ENCODE measurements at regions of chr11 and their contacts with region 1.

Region 1: DNA sequence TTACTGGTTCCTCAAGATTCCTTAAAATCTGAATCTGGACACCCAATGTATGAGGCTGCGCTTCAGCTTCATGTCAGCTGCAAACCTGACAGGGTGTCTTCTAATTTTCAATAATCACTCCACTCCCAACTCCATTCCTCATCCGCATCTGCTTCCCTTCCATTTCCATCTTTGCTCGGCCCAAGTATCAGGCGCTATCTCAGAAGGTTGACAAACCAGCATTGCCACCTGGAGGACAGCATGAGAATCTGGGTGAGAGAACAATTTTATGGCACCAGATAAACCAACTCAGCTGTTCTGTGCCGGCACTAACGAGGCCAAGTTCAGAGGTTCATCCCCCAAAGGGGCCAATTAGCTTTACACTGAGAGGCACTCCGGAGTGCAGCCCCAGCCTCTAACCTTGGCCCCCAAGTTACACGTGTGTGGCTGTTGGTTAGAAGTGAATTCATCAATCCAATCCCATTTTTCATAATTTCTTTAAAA is 79.1 kb upstream of the LMO2 start:
- DNase-seq: peak in 1 of 2 experiments; percentile 53
- H3K4me3 ChIP-seq: no peak overlapping the region
- H3K27ac ChIP-seq: no peak overlapping the region
- H3K4me1 ChIP-seq: no peaks in the 10 kb centered on the region
- H3K27me3 ChIP-seq: no peaks in the 10 kb centered on the region
- CTCF ChIP-seq: peak; percentile 31 to 94 (median 80)
- EP300 ChIP-seq: no peak
- POLR2A ChIP-seq: no peak
- RAD21 ChIP-seq: peak; percentile 96 to 97

Region 2: GRCh38 chr11:33835143-33835878 is 135.7 kb before region 1 on chr11:
- CTCF ChIA-PET with region 1: interaction called, 10 read pairs
- POLR2A ChIA-PET with region 1: no interaction called
- DNase-seq: no peak
- H3K4me3 ChIP-seq: no peak overlapping the region
- H3K27ac ChIP-seq: no peak overlapping the region
- H3K4me1 ChIP-seq: no peaks in the 10 kb centered on the region
- H3K27me3 ChIP-seq: no peaks in the 10 kb centered on the region
- CTCF ChIP-seq: no peak
- EP300 ChIP-seq: no peak
- POLR2A ChIP-seq: no peak
- RAD21 ChIP-seq: no peak

Region 3: GRCh38 chr11:33868647-33869461 is 102.2 kb before region 1 on chr11:
- CTCF ChIA-PET with region 1: interaction called, 326 read pairs
- POLR2A ChIA-PET with region 1: no interaction called
- DNase-seq: peak in 1 of 2 experiments; percentile 64
- H3K4me3 ChIP-seq: peak overlapping the region; percentile 58 to 77 (median 68)
- H3K27ac ChIP-seq: no peak overlapping the region
- H3K4me1 ChIP-seq: peaks cover 0 to 6% (median 5%) of the 10 kb centered on the region in 4 experiments; a peak in 5 of 7 replicates
- H3K27me3 ChIP-seq: peaks cover 17 to 46% (median 34%) of the 10 kb centered on the region in 4 experiments
- CTCF ChIP-seq: no peak
- EP300 ChIP-seq: no peak
- POLR2A ChIP-seq: no peak
- RAD21 ChIP-seq: no peak

Region 4: DNA sequence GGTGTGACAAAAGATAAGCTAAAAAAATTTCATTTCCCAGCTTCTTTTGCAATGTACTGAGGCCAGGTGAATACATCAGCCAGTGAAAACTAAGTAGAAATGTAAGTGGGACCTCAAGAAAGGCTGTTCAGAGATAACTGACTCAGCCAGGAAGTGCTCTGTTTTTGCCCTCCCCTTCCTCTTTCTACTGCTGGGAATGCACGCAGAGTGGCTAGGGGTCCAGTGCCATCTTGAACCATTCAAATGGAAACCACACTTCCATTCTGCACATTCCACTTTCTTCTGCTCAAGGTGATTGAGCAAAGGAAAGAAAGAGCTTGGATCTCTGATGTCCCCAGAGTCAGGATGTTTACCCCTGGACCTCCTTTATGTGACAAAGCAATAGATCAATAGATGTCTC is 51.4 kb before region 1 on chr11:
- CTCF ChIA-PET with region 1: no interaction called
- POLR2A ChIA-PET with region 1: no interaction called
- DNase-seq: no peak
- H3K4me3 ChIP-seq: no peak overlapping the region
- H3K27ac ChIP-seq: no peak overlapping the region
- H3K4me1 ChIP-seq: no peaks in the 10 kb centered on the region
- H3K27me3 ChIP-seq: no peaks in the 10 kb centered on the region
- CTCF ChIP-seq: no peak
- EP300 ChIP-seq: no peak
- POLR2A ChIP-seq: no peak
- RAD21 ChIP-seq: no peak

Region 5: DNA sequence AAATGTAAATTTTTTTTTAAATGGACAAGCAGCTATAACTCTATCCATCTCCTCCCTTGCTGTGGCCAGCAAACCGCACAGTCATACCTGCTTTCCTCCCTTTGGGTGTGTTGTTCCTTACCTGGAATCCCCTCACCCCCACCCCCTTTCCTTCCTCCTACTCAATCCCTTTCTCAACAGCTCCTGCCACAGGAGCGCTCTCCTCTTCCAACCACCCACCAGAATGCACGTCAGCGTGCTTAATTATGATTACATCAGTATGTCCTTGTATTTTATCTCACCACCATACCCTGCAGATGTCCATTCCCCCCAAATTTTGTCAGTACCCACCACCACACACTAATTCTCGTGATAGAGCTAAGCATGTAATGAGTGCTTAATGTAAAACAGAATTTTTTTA is 18.2 kb before region 1 on chr11:
- CTCF ChIA-PET with region 1: interaction called, 10 read pairs
- POLR2A ChIA-PET with region 1: no interaction called
- DNase-seq: no peak
- H3K4me3 ChIP-seq: no peak overlapping the region
- H3K27ac ChIP-seq: no peak overlapping the region
- H3K4me1 ChIP-seq: no peaks in the 10 kb centered on the region
- H3K27me3 ChIP-seq: peaks cover 0 to 3% (median 0%) of the 10 kb centered on the region in 4 experiments; a peak in 1 of 7 replicates
- CTCF ChIP-seq: no peak
- EP300 ChIP-seq: no peak
- POLR2A ChIP-seq: no peak
- RAD21 ChIP-seq: no peak

Region 6: DNA sequence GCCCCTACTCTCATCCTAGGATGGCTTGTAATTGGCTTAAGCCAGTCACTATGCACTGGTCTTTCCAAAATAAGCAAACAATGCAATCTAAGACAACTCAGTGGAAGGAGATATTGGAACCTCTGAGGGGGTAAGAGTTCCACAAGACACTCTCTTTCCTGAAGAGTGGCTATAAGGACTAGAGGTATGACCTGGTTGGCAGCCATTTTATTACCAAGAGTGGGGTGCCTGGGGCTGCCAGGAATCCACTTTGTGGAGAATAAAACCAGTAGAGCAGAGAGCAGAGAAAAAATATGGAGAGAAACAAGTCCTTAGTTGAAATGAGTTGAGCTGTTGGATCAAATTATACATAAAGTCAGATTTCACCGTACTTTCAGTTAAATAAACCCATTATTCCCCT is 41.7 kb after region 1 on chr11:
- CTCF ChIA-PET with region 1: no interaction called
- POLR2A ChIA-PET with region 1: no interaction called
- DNase-seq: no peak
- H3K4me3 ChIP-seq: no peak overlapping the region
- H3K27ac ChIP-seq: no peak overlapping the region
- H3K4me1 ChIP-seq: no peaks in the 10 kb centered on the region
- H3K27me3 ChIP-seq: peaks cover 0 to 1% (median 0%) of the 10 kb centered on the region in 4 experiments; a peak in 1 of 7 replicates
- CTCF ChIP-seq: no peak
- EP300 ChIP-seq: no peak
- POLR2A ChIP-seq: no peak
- RAD21 ChIP-seq: no peak

Measured in H1 (cell line).